Activated naive CD4-positive, alpha-beta T cell treated with anti-CD3 and anti-CD28 coated beads for 36 hours (primary cell): ENCODE measurements at regions of chr2 and their contacts with region 1.

Region 1: DNA sequence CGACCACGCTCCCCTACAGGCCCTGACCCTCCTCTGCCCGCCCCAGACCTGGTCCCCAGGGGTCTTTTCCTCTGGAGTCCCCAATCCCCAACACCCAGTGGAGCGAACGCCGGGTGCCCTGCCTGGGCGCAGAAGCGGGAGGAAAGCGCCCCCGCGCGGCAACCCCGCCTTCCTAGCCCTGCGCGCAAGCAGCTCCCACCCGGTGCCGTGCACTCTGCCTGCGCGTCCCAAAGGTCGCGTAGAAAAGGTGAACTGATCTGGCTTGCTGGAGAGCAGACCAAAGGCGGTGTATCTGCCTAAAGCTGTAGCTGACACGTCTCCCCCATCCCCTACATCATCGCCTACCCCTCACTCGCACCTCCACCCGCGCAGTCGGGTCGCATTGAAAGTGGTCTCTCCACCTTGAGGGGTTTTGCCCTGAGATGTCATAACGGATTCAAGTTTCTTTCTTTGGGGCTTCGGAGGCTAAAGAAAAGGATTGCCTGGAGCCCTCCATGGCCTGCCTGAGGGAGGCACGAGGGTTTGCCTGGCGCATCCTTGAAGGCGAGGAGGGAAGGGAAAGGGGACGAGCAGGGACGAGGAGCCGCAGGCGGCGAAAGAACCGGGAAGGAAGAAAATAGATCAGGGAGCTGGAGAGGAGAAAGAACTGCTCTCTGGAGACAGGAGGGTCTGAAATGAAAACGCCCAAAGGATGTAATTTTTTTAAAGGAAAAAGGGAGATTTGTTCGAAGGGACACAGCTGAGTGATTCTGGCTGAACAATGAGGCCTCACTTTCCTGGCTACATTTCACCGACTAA is 5.8 kb downstream of the GAD1 start:
- DNase-seq: peak; percentile 62
- H3K4me3 Mint-ChIP-seq: peak overlapping the region; percentile 27
- H3K27ac Mint-ChIP-seq: no peak overlapping the region
- H3K4me1 Mint-ChIP-seq: peaks cover 41% of the 10 kb centered on the region
- H3K27me3 Mint-ChIP-seq: peaks cover 79% of the 10 kb centered on the region

Region 2: GRCh38 chr2:170770606-170771420 is 51.7 kb before region 1 on chr2:
- CTCF ChIA-PET with region 1: interaction called, 4 read pairs
- intact Hi-C with region 1: loop called (anchors 2 kb)
- DNase-seq: peak; percentile 69
- H3K4me3 Mint-ChIP-seq: peak overlapping the region; percentile 85
- H3K27ac Mint-ChIP-seq: no peak overlapping the region
- H3K4me1 Mint-ChIP-seq: peaks cover 7% of the 10 kb centered on the region
- H3K27me3 Mint-ChIP-seq: peaks cover 9% of the 10 kb centered on the region

Region 3: GRCh38 chr2:170843656-170844055 is 21.2 kb after region 1 on chr2:
- CTCF ChIA-PET with region 1: interaction called, 3 read pairs
- intact Hi-C with region 1: loop called (anchors 2 kb)
- DNase-seq: peak; percentile 44
- H3K4me3 Mint-ChIP-seq: no peak overlapping the region
- H3K27ac Mint-ChIP-seq: no peak overlapping the region
- H3K4me1 Mint-ChIP-seq: peaks cover 12% of the 10 kb centered on the region
- H3K27me3 Mint-ChIP-seq: peaks cover 3% of the 10 kb centered on the region